ENCODE measurements at regions of chr3 and their contacts with region 1.

Region 1: GRCh38 chr3:39406368-39407258 is at the start of gene RPSA:
- DNase-seq: peak; percentile 94 to 96
- ATAC-seq: peak; percentile 93 to 98 (median 96)
- H3K4me3 ChIP-seq: peak within 1 kb of the TSS; percentile 80
- H3K27ac ChIP-seq: peak within 1 kb of the TSS; percentile 92
- H3K4me1 ChIP-seq: peaks cover 12% of the 10 kb centered on the region
- H3K27me3 ChIP-seq: no peaks in the 10 kb centered on the region
- CTCF ChIP-seq: peak; percentile 40
- total RNA-seq, gene RPSA: 285 to 738 (median 504) TPM

Region 2: DNA sequence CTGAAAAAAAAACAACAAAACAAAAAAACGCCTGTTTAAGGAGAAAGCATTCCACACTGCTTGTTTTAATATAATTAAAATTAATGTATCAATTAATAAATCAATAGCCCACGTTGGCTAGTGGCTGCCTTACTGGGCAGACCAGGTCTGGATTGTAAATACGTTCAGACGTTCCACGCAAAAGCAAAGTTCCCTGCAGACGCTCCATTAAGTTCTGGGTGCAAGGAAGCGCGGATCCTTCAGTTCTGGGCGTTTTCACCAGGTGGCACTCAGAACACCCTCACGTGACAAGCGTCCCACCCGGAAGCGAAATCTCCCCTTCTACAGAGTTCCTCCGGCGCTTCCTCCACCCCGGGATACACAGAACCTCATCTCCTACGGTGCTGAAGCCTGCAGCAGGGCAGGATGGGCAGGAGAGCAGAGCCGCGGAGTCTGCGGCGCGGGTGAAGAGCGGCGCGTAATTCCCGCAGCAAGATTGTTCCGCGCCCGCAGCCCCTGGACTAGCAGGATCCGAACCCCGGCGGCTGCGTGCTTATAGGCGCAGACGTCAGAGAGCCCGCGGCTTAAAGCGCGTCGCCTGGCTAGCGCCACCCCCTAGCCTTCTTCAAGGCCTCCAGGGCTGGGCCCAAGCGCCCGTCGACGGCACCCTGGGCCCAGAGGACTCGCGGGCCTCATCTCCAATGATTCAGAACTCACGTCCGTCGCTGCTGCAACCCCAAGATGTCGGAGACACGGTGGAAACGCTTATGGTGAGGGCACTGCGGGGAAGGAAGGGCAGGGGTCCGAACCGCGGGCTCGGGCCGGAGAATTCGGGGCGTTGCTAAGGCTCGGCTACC is 23.4 kb before region 1 on chr3 and contains the start of gene SLC25A38:
- intact Hi-C with region 1: loop called in 1 of 2 experiments (anchors 2 kb)
- DNase-seq: peak; percentile 75 to 85
- ATAC-seq: peak; percentile 78 to 83 (median 80)
- H3K4me3 ChIP-seq: peak within 1 kb of the TSS; percentile 84
- H3K27ac ChIP-seq: peak within 1 kb of the TSS; percentile 93
- H3K4me1 ChIP-seq: peaks cover 23% of the 10 kb centered on the region
- H3K27me3 ChIP-seq: no peaks in the 10 kb centered on the region
- CTCF ChIP-seq: peak; percentile 30
- total RNA-seq, gene SLC25A38: 24.9 to 34.8 (median 30.4) TPM

Region 3: GRCh38 chr3:39569095-39569494 is 162.5 kb after region 1 on chr3:
- intact Hi-C with region 1: no loop called
- DNase-seq: no peak
- ATAC-seq: no peak
- H3K4me3 ChIP-seq: no peak overlapping the region
- H3K27ac ChIP-seq: no peak overlapping the region
- H3K4me1 ChIP-seq: no peaks in the 10 kb centered on the region
- H3K27me3 ChIP-seq: no peaks in the 10 kb centered on the region
- CTCF ChIP-seq: no peak

Region 4: GRCh38 chr3:40309418-40309924 is 902.9 kb after region 1 on chr3 and contains the start of gene EIF1B:
- intact Hi-C with region 1: loop called in 1 of 2 experiments (anchors 10 kb)
- DNase-seq: peak; percentile 98 to 99
- ATAC-seq: peak; percentile 96 to 98 (median 98)
- H3K4me3 ChIP-seq: peak within 1 kb of the TSS; percentile 85
- H3K27ac ChIP-seq: peak within 1 kb of the TSS; percentile 96
- H3K4me1 ChIP-seq: peaks cover 42% of the 10 kb centered on the region
- H3K27me3 ChIP-seq: no peaks in the 10 kb centered on the region
- CTCF ChIP-seq: peak; percentile 90
- total RNA-seq, gene EIF1B: 60.1 to 75.8 (median 66.8) TPM